ENCODE measurements at regions of chr9 and their contacts with region 1.

Region 1: GRCh38 chr9:18405240-18405639 is 68.7 kb upstream of the ADAMTSL1 start:
- DNase-seq: no peak
- ATAC-seq: no peak
- H3K4me3 ChIP-seq: no peak overlapping the region
- H3K27ac ChIP-seq: no peak overlapping the region
- H3K4me1 ChIP-seq: no peaks in the 10 kb centered on the region
- H3K27me3 ChIP-seq: no peaks in the 10 kb centered on the region
- CTCF ChIP-seq: no peak
- POLR2A ChIP-seq: no peak
- RAD21 ChIP-seq: no peak

Region 2: DNA sequence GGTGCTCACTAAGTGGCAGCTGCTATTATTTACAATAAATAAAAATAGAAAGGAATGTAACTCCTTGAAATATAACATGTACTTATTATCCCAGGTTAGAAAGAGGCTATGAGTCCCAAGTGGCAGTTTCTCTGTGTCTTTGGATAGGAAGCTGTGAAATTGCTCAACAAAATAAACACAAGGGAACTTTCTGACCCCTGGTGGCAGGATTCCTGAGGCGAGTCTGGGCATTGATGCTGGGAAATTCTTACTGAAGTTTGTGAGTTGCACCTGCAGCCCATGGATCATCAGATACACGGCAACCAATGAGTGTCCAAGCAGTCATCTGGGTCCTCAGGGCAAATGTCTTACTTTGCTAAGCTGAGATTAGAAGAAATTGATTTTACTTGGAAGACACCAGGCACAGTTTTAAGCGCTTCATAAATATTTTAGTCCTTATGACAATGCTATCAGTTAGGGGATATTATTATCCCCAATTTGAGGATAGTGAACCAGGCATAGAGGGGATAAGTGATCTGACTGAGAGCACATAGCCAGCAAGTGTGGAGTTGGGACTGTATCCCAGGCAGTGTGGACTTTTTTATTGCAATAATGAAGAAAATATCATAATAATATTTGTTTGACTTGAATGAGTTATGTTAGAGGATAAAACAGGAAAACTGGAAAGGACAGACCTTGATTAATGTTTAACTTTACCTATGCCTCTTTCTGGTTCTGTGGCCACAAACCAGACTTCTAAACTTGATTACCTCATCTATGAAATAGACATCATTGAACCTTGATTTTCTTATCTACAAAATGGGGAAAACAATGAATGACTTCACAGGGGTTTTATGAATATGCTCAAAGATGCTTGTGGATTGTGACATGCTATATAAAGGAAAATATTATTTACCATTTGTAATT is 196.8 kb before region 1 on chr9:
- CTCF ChIA-PET with region 1: no interaction called
- POLR2A ChIA-PET with region 1: no interaction called
- dilution Hi-C with region 1: no loop called
- in situ Hi-C with region 1: no loop called
- intact Hi-C with region 1: no loop called
- DNase-seq: peak; percentile 12
- ATAC-seq: no peak
- H3K4me3 ChIP-seq: no peak overlapping the region
- H3K27ac ChIP-seq: no peak overlapping the region
- H3K4me1 ChIP-seq: no peaks in the 10 kb centered on the region
- H3K27me3 ChIP-seq: peaks cover 4% of the 10 kb centered on the region; the same call in 1 of the 2 replicates
- CTCF ChIP-seq: peak; percentile 39
- POLR2A ChIP-seq: no peak
- RAD21 ChIP-seq: peak; percentile 34; the same call in 1 of the 2 replicates

Region 3: DNA sequence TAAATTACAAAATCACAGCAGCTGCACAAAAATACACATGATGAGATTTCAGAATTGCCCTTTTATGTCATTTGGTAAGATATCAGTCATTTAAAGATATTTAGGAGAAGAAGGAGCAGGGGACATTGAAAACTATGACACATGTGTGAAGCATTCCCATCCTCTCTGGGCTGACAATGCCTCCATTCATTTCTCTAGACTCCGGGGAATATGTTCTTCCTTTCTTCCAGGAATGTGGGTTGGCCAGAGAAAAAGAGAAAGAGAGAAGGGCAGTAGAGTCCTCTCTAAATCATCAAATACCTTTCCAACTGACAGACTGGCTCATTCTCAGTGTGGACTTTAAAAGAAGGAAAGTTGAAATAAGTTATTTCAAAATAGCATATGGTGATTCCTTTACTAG is 136.9 kb before region 1 on chr9:
- CTCF ChIA-PET with region 1: interaction called, 11 read pairs
- POLR2A ChIA-PET with region 1: no interaction called
- dilution Hi-C with region 1: no loop called
- in situ Hi-C with region 1: no loop called
- intact Hi-C with region 1: no loop called
- DNase-seq: peak; percentile 74
- ATAC-seq: peak; percentile 77
- H3K4me3 ChIP-seq: no peak overlapping the region
- H3K27ac ChIP-seq: no peak overlapping the region
- H3K4me1 ChIP-seq: no peaks in the 10 kb centered on the region
- H3K27me3 ChIP-seq: no peaks in the 10 kb centered on the region
- CTCF ChIP-seq: no peak
- POLR2A ChIP-seq: no peak
- RAD21 ChIP-seq: no peak

Region 4: GRCh38 chr9:18281291-18281690 is 123.9 kb before region 1 on chr9:
- CTCF ChIA-PET with region 1: no interaction called
- POLR2A ChIA-PET with region 1: no interaction called
- dilution Hi-C with region 1: no loop called
- in situ Hi-C with region 1: no loop called
- intact Hi-C with region 1: no loop called
- DNase-seq: no peak
- ATAC-seq: no peak
- H3K4me3 ChIP-seq: no peak overlapping the region
- H3K27ac ChIP-seq: no peak overlapping the region
- H3K4me1 ChIP-seq: no peaks in the 10 kb centered on the region
- H3K27me3 ChIP-seq: no peaks in the 10 kb centered on the region
- CTCF ChIP-seq: no peak
- POLR2A ChIP-seq: no peak
- RAD21 ChIP-seq: no peak

Region 5: GRCh38 chr9:18366184-18366583 is 39.1 kb before region 1 on chr9:
- CTCF ChIA-PET with region 1: no interaction called
- POLR2A ChIA-PET with region 1: no interaction called
- dilution Hi-C with region 1: no loop called
- in situ Hi-C with region 1: no loop called
- intact Hi-C with region 1: no loop called
- DNase-seq: no peak
- ATAC-seq: no peak
- H3K4me3 ChIP-seq: no peak overlapping the region
- H3K27ac ChIP-seq: no peak overlapping the region
- H3K4me1 ChIP-seq: peaks cover 7% of the 10 kb centered on the region
- H3K27me3 ChIP-seq: no peaks in the 10 kb centered on the region
- CTCF ChIP-seq: no peak
- POLR2A ChIP-seq: no peak
- RAD21 ChIP-seq: no peak

Measured in IMR-90 (cell line).